ENCODE measurements at regions of chr5 and their contacts with region 1.

Region 1: DNA sequence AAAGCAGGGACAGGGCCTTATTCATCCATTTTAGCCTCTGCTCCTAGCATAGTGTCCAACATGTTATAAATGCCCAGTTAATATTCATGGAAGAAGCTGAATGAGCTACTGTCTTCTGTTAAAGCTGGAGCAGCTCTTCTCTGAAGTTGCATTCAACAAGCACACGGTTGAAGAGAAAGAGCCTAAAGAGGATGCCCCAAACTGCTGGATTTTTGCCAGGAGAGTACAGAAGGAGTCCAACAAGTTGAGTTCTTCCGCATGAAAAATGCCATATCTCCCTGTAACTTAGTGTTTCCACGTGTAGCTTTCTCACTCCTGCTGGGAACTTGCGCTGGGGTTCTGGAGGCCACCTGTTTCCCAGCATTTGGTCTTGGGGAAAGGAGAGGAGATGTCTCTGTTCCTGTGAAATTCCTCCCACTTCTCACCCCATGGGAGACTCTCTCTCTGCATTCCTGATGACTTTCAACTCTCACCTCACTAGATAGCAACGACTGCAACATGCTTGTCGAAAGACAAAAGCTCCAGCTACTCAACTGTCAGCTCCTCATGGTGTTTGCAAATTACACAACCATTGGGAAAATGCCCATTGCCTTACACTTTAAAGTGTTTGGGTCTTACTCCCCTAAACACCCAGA is 122.8 kb downstream of the KIF4B start:
- DNase-seq: no peak
- ATAC-seq: peak in 3 of 4 donors; percentile 47 to 58 (median 51)
- H3K4me3 ChIP-seq: no peak overlapping the region
- H3K27ac ChIP-seq: no peak overlapping the region
- H3K4me1 ChIP-seq: peaks cover 0 to 7% (median 0%) of the 10 kb centered on the region in 12 donors
- H3K27me3 ChIP-seq: no peaks in the 10 kb centered on the region
- CTCF ChIP-seq: no peak
- POLR2A ChIP-seq: no peak

Region 2: DNA sequence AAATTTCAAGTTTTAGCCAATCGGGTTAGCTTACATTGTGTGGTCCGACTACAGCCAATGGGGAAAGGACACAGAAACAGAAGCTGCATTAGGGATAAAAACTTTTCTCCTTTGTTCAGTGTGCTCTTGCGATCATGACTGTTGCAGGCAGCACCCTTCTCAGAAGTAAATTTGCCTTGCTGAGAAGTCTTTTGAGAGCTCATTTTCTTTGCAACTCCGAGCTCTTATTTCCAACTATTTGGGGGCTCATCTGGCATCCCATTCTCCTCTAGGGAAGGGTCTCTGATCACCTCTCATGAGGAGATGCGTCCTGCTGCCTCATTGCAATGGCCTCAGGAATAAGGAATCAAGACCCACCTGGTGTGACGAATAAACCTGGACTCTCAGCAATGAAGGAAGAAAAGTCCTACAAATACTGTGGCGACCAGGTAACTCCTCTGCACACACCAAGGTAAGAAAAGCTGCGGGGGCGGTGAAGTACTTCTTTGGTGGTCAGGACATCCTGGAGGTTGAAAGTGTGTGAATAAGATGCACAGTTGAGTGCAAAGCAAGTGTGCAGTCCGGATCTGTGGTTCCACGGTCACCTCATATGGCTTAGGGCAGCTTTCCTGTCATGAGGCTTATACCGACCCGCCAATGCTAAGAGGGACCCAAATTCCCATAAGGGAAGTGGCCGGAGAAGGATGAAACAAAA is 257.5 kb before region 1 on chr5:
- intact Hi-C with region 1: no loop called
- DNase-seq: no peak
- ATAC-seq: no peak
- H3K4me3 ChIP-seq: no peak overlapping the region
- H3K27ac ChIP-seq: peak overlapping the region in 1 of 12 donors; percentile 29
- H3K4me1 ChIP-seq: peaks cover 0 to 15% (median 4%) of the 10 kb centered on the region in 12 donors
- H3K27me3 ChIP-seq: no peaks in the 10 kb centered on the region
- CTCF ChIP-seq: no peak
- POLR2A ChIP-seq: no peak

Region 3: DNA sequence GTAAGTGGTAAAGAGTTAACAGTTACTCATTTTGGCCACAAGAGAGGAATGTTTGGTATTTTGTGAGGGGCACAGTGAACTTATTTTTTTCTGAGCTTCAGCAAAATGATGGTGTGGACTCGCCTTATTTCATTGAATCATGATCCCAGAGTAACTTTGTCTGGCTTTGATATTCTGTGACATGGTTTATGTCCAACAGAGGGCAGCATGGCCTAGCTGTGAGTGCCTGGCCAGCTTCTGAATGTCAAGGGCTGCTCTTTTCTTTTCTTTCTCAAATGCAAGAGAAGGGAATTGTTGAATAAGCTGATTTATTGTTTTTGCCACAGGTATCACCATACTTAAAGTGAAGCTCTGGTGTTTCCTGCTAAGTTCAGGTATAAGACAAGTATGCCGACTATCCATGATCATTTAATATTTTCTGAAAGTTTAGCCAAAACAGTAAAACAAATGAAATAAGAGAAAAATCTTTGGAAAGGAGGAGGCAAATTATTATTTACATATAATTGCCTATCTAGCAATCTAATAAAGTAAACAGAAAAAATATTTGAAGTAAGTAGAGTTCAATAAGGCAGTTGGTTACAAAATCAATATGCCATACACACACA is 163.8 kb before region 1 on chr5:
- intact Hi-C with region 1: loop called in 9 of 10 experiments (anchors 2 to 10 kb)
- DNase-seq: peak in 4 of 5 donors; percentile 27 to 37 (median 28)
- ATAC-seq: peak; percentile 47 to 78 (median 69)
- H3K4me3 ChIP-seq: no peak overlapping the region
- H3K27ac ChIP-seq: no peak overlapping the region
- H3K4me1 ChIP-seq: peaks cover 0 to 6% (median 0%) of the 10 kb centered on the region in 12 donors
- H3K27me3 ChIP-seq: no peaks in the 10 kb centered on the region
- CTCF ChIP-seq: peak; percentile 43 to 75 (median 57)
- POLR2A ChIP-seq: no peak

Region 4: DNA sequence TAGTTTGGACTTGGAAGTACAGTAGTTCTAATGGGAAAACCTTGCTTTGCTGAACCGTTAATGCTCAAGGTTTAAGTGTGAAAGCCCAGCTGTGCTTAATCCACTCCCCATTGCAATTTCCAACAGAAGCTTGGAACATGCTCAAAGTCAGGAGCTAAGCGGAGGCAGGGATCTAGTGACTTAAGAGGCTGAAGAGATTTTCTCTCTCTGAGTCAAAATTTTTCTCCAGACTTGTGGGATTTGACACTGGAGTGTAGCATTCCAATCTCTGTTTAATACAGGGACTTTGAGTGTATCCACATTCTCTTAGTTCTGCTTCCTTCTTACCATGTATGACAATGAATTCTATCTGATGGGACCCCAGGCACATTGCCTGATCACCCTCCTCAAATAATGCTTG is 349.1 kb after region 1 on chr5:
- intact Hi-C with region 1: loop called in 2 of 10 experiments (anchors 5 kb)
- DNase-seq: no peak
- ATAC-seq: no peak
- H3K4me3 ChIP-seq: no peak overlapping the region
- H3K27ac ChIP-seq: no peak overlapping the region
- H3K4me1 ChIP-seq: peaks cover 0 to 15% (median 0%) of the 10 kb centered on the region in 12 donors
- H3K27me3 ChIP-seq: no peaks in the 10 kb centered on the region
- CTCF ChIP-seq: no peak
- POLR2A ChIP-seq: no peak

Region 5: GRCh38 chr5:156834916-156835315 is 1698.6 kb after region 1 on chr5:
- intact Hi-C with region 1: no loop called
- DNase-seq: no peak
- ATAC-seq: no peak
- H3K4me3 ChIP-seq: no peak overlapping the region
- H3K27ac ChIP-seq: no peak overlapping the region
- H3K4me1 ChIP-seq: no peaks in the 10 kb centered on the region
- H3K27me3 ChIP-seq: no peaks in the 10 kb centered on the region
- CTCF ChIP-seq: no peak
- POLR2A ChIP-seq: no peak